ENCODE measurements at regions of chr20 and their contacts with region 1.

Region 1: GRCh38 chr20:2873010-2873746 is at the start of gene PTPRA:
- DNase-seq: peak; percentile 91 to 97 (median 94)
- ATAC-seq: peak; percentile 96
- H3K4me3 ChIP-seq: peak within 1 kb of the TSS; percentile 82 to 96
- H3K27ac ChIP-seq: peak within 1 kb of the TSS; percentile 73 to 81
- H3K4me1 ChIP-seq: peaks cover 5 to 56% of the 10 kb centered on the region in 2 donors
- H3K27me3 ChIP-seq: peaks cover 0 to 14% of the 10 kb centered on the region in 2 donors
- CTCF ChIP-seq: no peak
- polyA plus RNA-seq, gene PTPRA: 76.9 to 88.1 (median 80.1) TPM

Region 2: GRCh38 chr20:2688041-2688591 is 185.1 kb before region 1 on chr20:
- intact Hi-C with region 1: no loop called
- DNase-seq: peak in 2 of 4 donors; percentile 54 to 76
- ATAC-seq: peak; percentile 60
- H3K4me3 ChIP-seq: no peak overlapping the region
- H3K27ac ChIP-seq: no peak overlapping the region
- H3K4me1 ChIP-seq: peaks cover 0 to 20% of the 10 kb centered on the region in 2 donors
- H3K27me3 ChIP-seq: peaks cover 11 to 75% of the 10 kb centered on the region in 2 donors
- CTCF ChIP-seq: peak; percentile 36 to 59

Region 3: DNA sequence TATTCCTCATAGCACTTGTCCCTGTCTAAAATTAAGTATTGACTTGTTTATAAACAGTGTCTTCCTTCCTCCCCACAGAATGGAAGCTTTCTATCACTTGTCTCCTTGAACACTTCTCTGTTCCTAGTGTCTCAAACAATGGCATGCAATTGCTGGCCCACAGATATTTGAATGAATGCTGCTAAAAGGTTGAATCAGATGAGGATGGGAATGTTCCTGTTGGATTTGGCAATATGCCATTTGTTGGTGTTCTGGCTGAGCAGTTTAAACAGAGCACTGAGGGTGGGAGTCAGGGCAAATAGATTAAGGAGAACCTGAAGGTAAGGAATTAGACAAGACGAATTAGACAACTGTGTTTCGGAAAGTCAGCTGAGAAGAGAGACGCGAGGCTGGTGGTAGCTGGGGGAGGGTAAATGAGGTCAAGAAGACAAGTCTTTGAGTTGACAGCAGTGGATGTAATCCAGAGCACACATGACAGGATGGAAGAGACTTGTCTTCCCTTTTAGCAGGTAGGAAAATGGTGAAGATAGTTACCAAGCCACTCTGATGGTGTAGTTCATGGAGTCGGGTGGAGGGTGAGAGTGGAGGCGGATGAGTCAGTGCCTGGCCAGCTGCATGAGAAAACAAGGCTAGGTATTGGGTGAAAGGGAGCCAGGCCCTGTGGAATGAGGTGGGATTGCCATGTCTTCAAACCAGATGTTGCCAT is 111.9 kb after region 1 on chr20:
- intact Hi-C with region 1: loop called in 1 of 2 experiments (anchors 10 kb)
- DNase-seq: no peak
- ATAC-seq: peak; percentile 32
- H3K4me3 ChIP-seq: no peak overlapping the region
- H3K27ac ChIP-seq: no peak overlapping the region
- H3K4me1 ChIP-seq: peaks cover 0 to 34% of the 10 kb centered on the region in 2 donors
- H3K27me3 ChIP-seq: no peaks in the 10 kb centered on the region
- CTCF ChIP-seq: no peak